ENCODE measurements at regions of chr2 and their contacts with region 1.

Region 1: DNA sequence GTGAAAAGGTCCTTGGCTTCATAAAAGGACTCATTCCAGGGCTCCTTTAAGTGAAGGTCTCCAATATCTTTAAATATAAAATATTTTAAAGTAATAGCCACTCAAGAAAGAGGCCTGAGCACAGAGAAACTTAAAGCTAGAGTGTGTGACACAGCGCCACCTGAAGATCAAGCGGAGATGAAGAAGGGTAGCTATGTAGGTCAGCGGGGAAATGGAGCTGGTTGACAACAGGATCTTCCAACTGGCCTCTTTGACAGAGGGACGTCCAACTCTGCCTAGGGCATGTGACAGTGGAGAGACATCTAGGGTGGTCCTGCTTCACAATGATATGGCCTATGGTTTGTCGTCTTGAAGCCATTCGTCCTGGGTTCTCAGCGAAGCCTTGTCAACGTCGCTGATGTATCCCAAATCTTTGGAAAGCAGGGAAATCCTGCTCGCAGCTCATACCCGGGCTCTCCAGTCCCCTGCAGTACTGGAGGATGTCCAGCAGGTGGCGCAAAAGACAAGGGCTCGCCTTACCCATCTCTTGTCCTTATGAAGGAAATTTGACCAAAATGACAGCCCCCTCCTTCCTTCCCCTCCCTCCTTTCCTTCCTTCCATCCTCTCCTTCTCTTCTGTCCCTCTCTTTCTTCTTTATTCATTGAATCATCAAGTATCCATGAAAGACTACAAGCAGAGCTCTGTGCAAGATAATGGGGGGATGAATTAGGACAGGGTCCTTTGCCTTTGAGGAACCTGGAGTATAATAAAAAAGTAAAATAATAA is 59.6 kb downstream of the LONRF2 start:
- DNase-seq: no peak
- ATAC-seq: peak; percentile 80
- H3K4me3 ChIP-seq: no peak overlapping the region
- H3K27ac ChIP-seq: no peak overlapping the region
- H3K4me1 ChIP-seq: no peaks in the 10 kb centered on the region
- H3K27me3 ChIP-seq: no peaks in the 10 kb centered on the region; a peak in 1 of 4 replicates
- CTCF ChIP-seq: peak; percentile 88 to 98 (median 91)
- EP300 ChIP-seq: no peak
- POLR2A ChIP-seq: no peak
- RAD21 ChIP-seq: peak; percentile 93

Region 2: GRCh38 chr2:99559075-99559662 is 703.6 kb before region 1 on chr2:
- CTCF ChIA-PET with region 1: interaction called, 30 read pairs
- POLR2A ChIA-PET with region 1: no interaction called
- RAD21 ChIA-PET with region 1: interaction called, 4 read pairs
- SMC1A ChIA-PET with region 1: interaction called, 16 read pairs
- in situ Hi-C with region 1: no loop called
- intact Hi-C with region 1: loop called (anchors 1 kb)
- DNase-seq: no peak
- ATAC-seq: peak; percentile 99
- H3K4me3 ChIP-seq: no peak overlapping the region
- H3K27ac ChIP-seq: no peak overlapping the region
- H3K4me1 ChIP-seq: no peaks in the 10 kb centered on the region
- H3K27me3 ChIP-seq: no peaks in the 10 kb centered on the region; a peak in 2 of 4 replicates
- CTCF ChIP-seq: peak; percentile 93 to 97 (median 96)
- EP300 ChIP-seq: no peak
- POLR2A ChIP-seq: no peak
- RAD21 ChIP-seq: peak; percentile 96

Region 3: GRCh38 chr2:100272841-100273329 is 10.1 kb after region 1 on chr2:
- CTCF ChIA-PET with region 1: interaction called, 25 read pairs
- POLR2A ChIA-PET with region 1: no interaction called
- RAD21 ChIA-PET with region 1: no interaction called
- SMC1A ChIA-PET with region 1: interaction called, 13 read pairs
- in situ Hi-C with region 1: no loop called
- intact Hi-C with region 1: no loop called
- DNase-seq: no peak
- ATAC-seq: no peak
- H3K4me3 ChIP-seq: no peak overlapping the region
- H3K27ac ChIP-seq: no peak overlapping the region
- H3K4me1 ChIP-seq: no peaks in the 10 kb centered on the region
- H3K27me3 ChIP-seq: no peaks in the 10 kb centered on the region; a peak in 1 of 4 replicates
- CTCF ChIP-seq: no peak
- EP300 ChIP-seq: no peak
- POLR2A ChIP-seq: no peak
- RAD21 ChIP-seq: no peak

Region 4: GRCh38 chr2:100394111-100394641 is 131.4 kb after region 1 on chr2:
- CTCF ChIA-PET with region 1: interaction called, 11 read pairs
- POLR2A ChIA-PET with region 1: no interaction called
- RAD21 ChIA-PET with region 1: interaction called, 3 read pairs
- SMC1A ChIA-PET with region 1: interaction called, 3 read pairs
- in situ Hi-C with region 1: no loop called
- intact Hi-C with region 1: no loop called
- DNase-seq: peak; percentile 55
- ATAC-seq: peak; percentile 84
- H3K4me3 ChIP-seq: peak overlapping the region; percentile 35; the same call in 1 of the 2 replicates
- H3K27ac ChIP-seq: peak overlapping the region; percentile 81
- H3K4me1 ChIP-seq: peaks cover 26% of the 10 kb centered on the region
- H3K27me3 ChIP-seq: no peaks in the 10 kb centered on the region
- CTCF ChIP-seq: no peak
- EP300 ChIP-seq: no peak
- POLR2A ChIP-seq: peak; percentile 72
- RAD21 ChIP-seq: no peak

Region 5: GRCh38 chr2:100482741-100483140 is 220.0 kb after region 1 on chr2:
- CTCF ChIA-PET with region 1: interaction called, 8 read pairs
- POLR2A ChIA-PET with region 1: no interaction called
- RAD21 ChIA-PET with region 1: no interaction called
- SMC1A ChIA-PET with region 1: interaction called, 3 read pairs
- in situ Hi-C with region 1: no loop called
- intact Hi-C with region 1: loop called (anchors 10 kb)
- DNase-seq: no peak
- ATAC-seq: no peak
- H3K4me3 ChIP-seq: no peak overlapping the region
- H3K27ac ChIP-seq: no peak overlapping the region
- H3K4me1 ChIP-seq: no peaks in the 10 kb centered on the region
- H3K27me3 ChIP-seq: no peaks in the 10 kb centered on the region; a peak in 2 of 4 replicates
- CTCF ChIP-seq: peak; percentile 13 to 26 (median 24); a peak in 3 of 6 replicates
- EP300 ChIP-seq: no peak
- POLR2A ChIP-seq: no peak
- RAD21 ChIP-seq: no peak

Region 6: GRCh38 chr2:100610381-100610831 is 347.7 kb after region 1 on chr2:
- CTCF ChIA-PET with region 1: interaction called, 14 read pairs
- POLR2A ChIA-PET with region 1: no interaction called
- RAD21 ChIA-PET with region 1: interaction called, 4 read pairs
- SMC1A ChIA-PET with region 1: interaction called, 5 read pairs
- in situ Hi-C with region 1: no loop called
- intact Hi-C with region 1: loop called (anchors 10 kb)
- DNase-seq: no peak
- ATAC-seq: peak; percentile 93
- H3K4me3 ChIP-seq: no peak overlapping the region
- H3K27ac ChIP-seq: no peak overlapping the region
- H3K4me1 ChIP-seq: no peaks in the 10 kb centered on the region
- H3K27me3 ChIP-seq: no peaks in the 10 kb centered on the region; a peak in 1 of 4 replicates
- CTCF ChIP-seq: peak; percentile 63 to 70 (median 69)
- EP300 ChIP-seq: no peak
- POLR2A ChIP-seq: no peak
- RAD21 ChIP-seq: peak; percentile 79